ENCODE measurements at regions of chr3 and their contacts with region 1.

Region 1: DNA sequence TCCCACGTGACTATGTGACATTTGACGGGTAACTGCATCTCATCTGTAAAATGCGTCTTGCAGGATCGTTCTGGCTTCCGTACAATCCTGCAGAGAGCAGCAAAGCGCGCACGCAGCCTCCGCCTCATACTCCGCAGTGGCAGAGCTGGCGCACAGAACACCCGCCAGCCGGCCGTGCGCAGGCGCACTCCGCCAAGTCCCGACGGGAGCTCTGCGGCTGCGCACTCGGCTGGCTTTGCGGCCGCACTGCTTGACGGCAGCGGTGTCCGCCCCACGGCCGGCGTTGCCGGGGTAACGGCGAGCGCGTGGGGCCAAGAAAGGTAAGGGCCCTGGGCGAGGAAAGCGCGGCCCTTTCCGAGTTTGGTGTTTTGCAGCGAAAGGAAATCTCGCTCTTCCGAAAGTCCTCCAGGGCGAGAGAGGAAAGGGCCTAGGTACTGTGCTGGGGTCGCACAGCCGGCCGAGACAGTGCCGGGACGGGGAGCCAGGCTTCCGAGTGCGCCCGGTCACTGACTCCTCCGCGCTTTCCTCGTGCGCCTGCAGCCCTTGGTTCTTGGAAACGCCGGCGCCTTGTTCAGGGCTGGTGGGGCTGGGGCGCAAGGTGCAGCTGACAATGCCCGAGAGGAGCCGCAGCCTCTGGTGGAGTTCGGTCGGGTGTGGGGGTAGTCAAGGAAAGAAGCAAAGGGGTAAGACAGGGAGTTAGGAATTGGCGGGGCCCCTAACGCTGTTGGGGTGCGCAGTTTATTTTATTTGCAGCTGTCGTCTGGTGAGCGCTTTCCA is at the start of gene TSEN2:
- DNase-seq: peak; percentile 92 to 99 (median 96)
- ATAC-seq: peak; percentile 96
- H3K4me3 ChIP-seq: peak within 1 kb of the TSS; percentile 87
- H3K4me3 Mint-ChIP-seq: peak within 1 kb of the TSS; percentile 97
- H3K27ac ChIP-seq: peak within 1 kb of the TSS; percentile 72 to 81
- H3K27ac Mint-ChIP-seq: peak within 1 kb of the TSS; percentile 97
- H3K4me1 ChIP-seq: peaks cover 29% of the 10 kb centered on the region
- H3K4me1 Mint-ChIP-seq: peaks cover 52% of the 10 kb centered on the region
- H3K27me3 ChIP-seq: no peaks in the 10 kb centered on the region
- H3K27me3 Mint-ChIP-seq: no peaks in the 10 kb centered on the region
- CTCF ChIP-seq: no peak
- total RNA-seq, gene TSEN2: 8.0 to 8.2 TPM

Region 2: DNA sequence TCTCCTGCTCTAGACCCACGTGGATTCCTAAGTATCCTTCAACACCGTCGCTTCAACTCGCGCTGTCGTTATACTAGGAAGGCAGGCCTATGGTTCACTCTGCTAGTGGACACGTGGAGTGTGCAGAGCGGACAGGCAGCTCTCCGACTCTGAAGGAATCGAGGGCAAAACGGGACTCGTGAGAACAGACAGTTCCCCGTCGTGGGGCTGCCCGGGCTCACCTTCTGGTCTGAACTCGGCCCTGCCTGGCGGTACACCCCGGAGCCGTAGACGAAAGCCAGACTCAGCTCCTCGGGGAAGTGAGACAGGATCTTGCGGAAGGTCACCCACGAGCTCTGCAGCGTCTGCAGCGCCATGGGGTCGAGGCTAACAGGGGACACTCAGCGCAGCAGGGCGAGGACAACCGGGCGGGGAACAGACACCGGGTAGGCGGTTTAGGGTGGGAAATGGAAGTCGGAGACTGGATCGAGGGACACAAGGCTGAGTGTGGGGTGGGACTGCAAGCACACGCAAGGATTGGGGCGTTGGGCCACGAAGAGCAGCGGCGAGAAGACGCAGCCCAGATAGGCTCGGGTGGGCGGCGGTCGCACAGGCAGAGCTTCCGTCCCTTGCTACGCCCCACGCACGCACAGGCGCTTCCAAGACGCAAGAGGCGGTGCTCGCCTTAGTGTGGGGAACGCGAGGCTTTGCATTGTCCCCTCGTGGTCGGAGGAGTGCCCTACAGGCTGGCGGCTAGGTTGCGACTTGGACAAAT is 637.9 kb before region 1 on chr3 and contains the start of gene TAMM41:
- CTCF ChIA-PET with region 1: no interaction called
- POLR2A ChIA-PET with region 1: interaction called, 7 read pairs
- intact Hi-C with region 1: loop called in 1 of 2 experiments (anchors 5 kb)
- DNase-seq: peak; percentile 78 to 94 (median 87)
- ATAC-seq: peak; percentile 99
- H3K4me3 ChIP-seq: peak within 1 kb of the TSS; percentile 95
- H3K4me3 Mint-ChIP-seq: peak within 1 kb of the TSS; percentile 95
- H3K27ac ChIP-seq: peak within 1 kb of the TSS; percentile 59 to 69
- H3K27ac Mint-ChIP-seq: peak within 1 kb of the TSS; percentile 93
- H3K4me1 ChIP-seq: peaks cover 34% of the 10 kb centered on the region
- H3K4me1 Mint-ChIP-seq: peaks cover 44% of the 10 kb centered on the region
- H3K27me3 ChIP-seq: no peaks in the 10 kb centered on the region
- H3K27me3 Mint-ChIP-seq: no peaks in the 10 kb centered on the region
- CTCF ChIP-seq: peak; percentile 76
- total RNA-seq, gene TAMM41: 19.7 to 22.0 TPM

Region 3: DNA sequence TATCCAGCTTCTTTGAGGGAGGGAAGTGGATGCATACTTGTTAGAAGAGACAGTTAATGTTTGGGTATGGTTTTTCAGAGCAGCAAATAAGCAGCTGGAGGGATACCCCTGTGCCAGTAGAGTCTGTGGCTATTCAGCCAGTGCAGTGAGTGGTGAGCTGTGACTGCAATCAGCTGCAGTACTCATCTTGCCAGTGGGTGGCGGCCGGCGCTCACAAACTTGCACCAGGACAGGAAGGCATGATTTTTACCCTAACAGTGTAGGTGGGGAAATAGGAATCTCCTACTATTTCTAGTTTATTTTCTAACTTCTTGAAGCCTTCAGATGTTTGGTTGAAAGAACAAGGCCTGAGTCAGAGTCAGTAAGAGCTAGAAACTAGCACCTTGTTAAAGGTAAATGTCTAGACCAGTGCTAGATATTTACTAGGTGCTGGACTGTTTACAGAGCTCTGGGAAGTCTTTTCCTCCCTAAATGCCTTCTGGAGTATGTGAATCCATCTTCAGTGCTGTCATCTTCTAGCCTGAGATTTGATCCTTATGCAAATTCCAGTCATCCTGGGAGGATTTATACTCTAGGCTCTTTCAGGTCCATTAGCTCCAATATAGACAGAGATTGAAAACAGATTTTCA is 349.2 kb before region 1 on chr3:
- CTCF ChIA-PET with region 1: interaction called, 20 read pairs
- POLR2A ChIA-PET with region 1: interaction called, 5 read pairs
- intact Hi-C with region 1: loop called (anchors 1 kb)
- DNase-seq: peak; percentile 25 to 75 (median 45)
- ATAC-seq: peak; percentile 86
- H3K4me3 ChIP-seq: no peak overlapping the region
- H3K4me3 Mint-ChIP-seq: no peak overlapping the region
- H3K27ac ChIP-seq: no peak overlapping the region
- H3K27ac Mint-ChIP-seq: no peak overlapping the region
- H3K4me1 ChIP-seq: no peaks in the 10 kb centered on the region
- H3K4me1 Mint-ChIP-seq: no peaks in the 10 kb centered on the region
- H3K27me3 ChIP-seq: peaks cover 0 to 5% of the 10 kb centered on the region in 2 experiments
- H3K27me3 Mint-ChIP-seq: peaks cover 20% of the 10 kb centered on the region
- CTCF ChIP-seq: peak; percentile 77

Region 4: DNA sequence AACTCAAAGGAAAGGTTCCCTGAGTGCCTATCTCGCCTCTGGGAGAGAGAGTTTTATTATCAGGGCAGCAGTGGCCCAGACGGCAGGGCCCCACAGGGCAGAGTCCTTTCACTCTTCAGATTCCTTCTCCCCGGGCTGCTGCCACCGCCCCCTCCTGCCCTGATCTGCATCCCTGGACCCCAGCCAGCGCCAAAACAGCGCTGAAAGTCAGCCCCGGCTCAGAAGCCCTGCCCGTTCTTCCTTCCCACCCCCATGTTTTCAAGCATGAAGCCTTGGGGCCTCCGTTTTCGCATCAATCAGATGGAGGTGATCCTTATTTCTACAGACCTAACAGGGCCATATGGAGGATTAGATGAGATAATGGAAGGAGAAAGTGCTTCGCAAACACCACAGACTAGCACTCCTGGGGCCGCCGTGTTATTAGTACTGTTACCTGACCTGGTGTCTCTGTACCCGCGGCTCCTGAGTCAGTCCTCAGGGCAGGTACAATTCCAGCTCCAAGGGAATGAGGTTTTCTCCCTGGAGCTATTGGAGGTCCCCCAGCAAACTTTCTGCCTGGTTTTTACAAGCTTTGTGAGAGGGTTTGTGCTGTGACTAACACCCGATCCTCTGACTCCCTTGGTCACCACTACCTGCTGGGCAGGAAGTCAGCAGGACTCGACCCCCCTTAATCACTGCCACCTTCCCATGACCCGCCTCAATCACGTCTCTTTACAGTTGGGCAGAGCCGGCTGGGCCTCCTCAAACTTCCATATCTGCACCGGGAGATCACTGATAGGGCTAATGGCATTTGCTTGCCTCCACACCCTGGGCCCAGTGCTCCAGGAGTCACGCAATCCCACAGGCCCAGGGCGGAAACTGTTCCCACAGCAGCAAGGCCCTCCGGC is 39.6 kb before region 1 on chr3:
- CTCF ChIA-PET with region 1: no interaction called
- POLR2A ChIA-PET with region 1: no interaction called
- intact Hi-C with region 1: no loop called
- DNase-seq: no peak
- ATAC-seq: no peak
- H3K4me3 ChIP-seq: no peak overlapping the region
- H3K4me3 Mint-ChIP-seq: no peak overlapping the region
- H3K27ac ChIP-seq: no peak overlapping the region
- H3K27ac Mint-ChIP-seq: no peak overlapping the region
- H3K4me1 ChIP-seq: no peaks in the 10 kb centered on the region
- H3K4me1 Mint-ChIP-seq: no peaks in the 10 kb centered on the region
- H3K27me3 ChIP-seq: no peaks in the 10 kb centered on the region
- H3K27me3 Mint-ChIP-seq: no peaks in the 10 kb centered on the region
- CTCF ChIP-seq: no peak

Region 5: GRCh38 chr3:12536423-12536822 is 52.0 kb after region 1 on chr3:
- CTCF ChIA-PET with region 1: no interaction called
- POLR2A ChIA-PET with region 1: no interaction called
- intact Hi-C with region 1: no loop called
- DNase-seq: no peak
- ATAC-seq: no peak
- H3K4me3 ChIP-seq: no peak overlapping the region
- H3K4me3 Mint-ChIP-seq: no peak overlapping the region
- H3K27ac ChIP-seq: no peak overlapping the region
- H3K27ac Mint-ChIP-seq: no peak overlapping the region
- H3K4me1 ChIP-seq: no peaks in the 10 kb centered on the region
- H3K4me1 Mint-ChIP-seq: no peaks in the 10 kb centered on the region
- H3K27me3 ChIP-seq: no peaks in the 10 kb centered on the region
- H3K27me3 Mint-ChIP-seq: no peaks in the 10 kb centered on the region
- CTCF ChIP-seq: no peak